AG04450 (cell line): ENCODE measurements at regions of chr22 and their contacts with region 1.

Region 1: DNA sequence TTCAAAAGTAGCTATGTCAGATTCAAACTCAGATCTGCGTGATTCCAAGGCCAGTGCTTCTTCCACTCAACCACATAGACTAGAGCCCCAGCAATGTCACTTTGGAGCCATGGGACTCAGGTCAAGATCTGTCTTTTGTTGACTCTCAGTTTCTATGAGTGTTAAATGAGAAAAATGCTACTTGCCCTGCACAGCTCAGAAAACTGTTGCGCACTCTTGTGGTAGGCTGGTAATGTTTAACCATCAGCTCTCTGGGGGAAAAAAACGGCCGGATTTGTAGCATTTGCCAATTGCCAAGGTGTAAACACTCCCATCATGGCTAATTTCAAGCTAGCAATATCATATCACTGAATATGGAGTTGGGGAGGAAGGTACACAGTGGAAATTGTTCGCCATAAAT is 328.1 kb upstream of the SYN3 start:
- DNase-seq: no peak
- H3K4me3 ChIP-seq: no peak overlapping the region
- H3K27ac ChIP-seq: no peak overlapping the region
- H3K27me3 ChIP-seq: no peaks in the 10 kb centered on the region
- CTCF ChIP-seq: no peak

Region 2: DNA sequence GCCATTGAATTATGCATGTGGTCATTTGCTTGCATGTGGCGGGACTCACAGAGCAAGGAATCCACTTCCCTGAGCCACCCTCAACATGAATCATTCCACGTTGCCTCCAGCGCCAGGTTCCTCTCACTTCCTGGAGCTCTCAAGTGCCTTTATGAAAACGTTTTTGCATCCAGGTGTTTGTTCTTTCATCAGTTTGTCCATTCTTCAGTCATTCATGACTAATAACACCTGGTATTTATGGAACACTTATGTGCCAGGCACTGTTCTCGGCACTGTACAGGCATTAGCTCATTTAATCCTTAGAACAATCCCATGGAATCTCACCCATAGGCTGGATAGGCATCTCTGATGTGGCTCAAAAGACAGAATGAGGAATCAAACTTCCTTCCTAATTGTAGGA is 72.0 kb before region 1 on chr22:
- CTCF ChIA-PET with region 1: no interaction called
- POLR2A ChIA-PET with region 1: no interaction called
- DNase-seq: no peak
- H3K4me3 ChIP-seq: no peak overlapping the region
- H3K27ac ChIP-seq: no peak overlapping the region
- H3K27me3 ChIP-seq: no peaks in the 10 kb centered on the region
- CTCF ChIP-seq: no peak

Region 3: GRCh38 chr22:33401291-33401690 is 15.0 kb after region 1 on chr22:
- CTCF ChIA-PET with region 1: no interaction called
- POLR2A ChIA-PET with region 1: no interaction called
- DNase-seq: peak; percentile 7
- H3K4me3 ChIP-seq: no peak overlapping the region
- H3K27ac ChIP-seq: no peak overlapping the region
- H3K27me3 ChIP-seq: no peaks in the 10 kb centered on the region
- CTCF ChIP-seq: no peak

Region 4: GRCh38 chr22:33529424-33530113 is 143.3 kb after region 1 on chr22:
- CTCF ChIA-PET with region 1: interaction called, 11 read pairs
- POLR2A ChIA-PET with region 1: no interaction called
- DNase-seq: no peak
- H3K4me3 ChIP-seq: no peak overlapping the region
- H3K27ac ChIP-seq: no peak overlapping the region
- H3K27me3 ChIP-seq: no peaks in the 10 kb centered on the region
- CTCF ChIP-seq: no peak